ENCODE measurements at regions of chr10 and their contacts with region 1.

Region 1: GRCh38 chr10:104308439-104308903 is 29.8 kb downstream of the ITPRIP start:
- DNase-seq: peak in 6 of 10 donors; percentile 32 to 82 (median 57)
- ATAC-seq: peak; percentile 75
- H3K4me3 Mint-ChIP-seq: peak overlapping the region; percentile 50 to 83 (median 71)
- H3K27ac Mint-ChIP-seq: peak overlapping the region; percentile 16 to 90 (median 80)
- H3K4me1 Mint-ChIP-seq: peaks cover 48 to 81% (median 73%) of the 10 kb centered on the region in 4 donors
- H3K27me3 Mint-ChIP-seq: peaks cover 0 to 2% (median 0%) of the 10 kb centered on the region in 5 donors

Region 2: GRCh38 chr10:104146882-104147281 is 161.6 kb before region 1 on chr10:
- POLR2A ChIA-PET with region 1: no interaction called
- DNase-seq: no peak
- ATAC-seq: no peak
- H3K4me3 Mint-ChIP-seq: no peak overlapping the region
- H3K27ac Mint-ChIP-seq: no peak overlapping the region
- H3K4me1 Mint-ChIP-seq: no peaks in the 10 kb centered on the region
- H3K27me3 Mint-ChIP-seq: peaks cover 9 to 22% (median 11%) of the 10 kb centered on the region in 5 donors

Region 3: GRCh38 chr10:104268716-104269645 is 39.5 kb before region 1 on chr10 and contains the start of gene GSTO2:
- POLR2A ChIA-PET with region 1: no interaction called
- DNase-seq: peak; percentile 93 to 99 (median 98)
- ATAC-seq: peak; percentile 89 to 94
- H3K4me3 Mint-ChIP-seq: peak within 1 kb of the TSS; percentile 89 to 96 (median 94)
- H3K27ac Mint-ChIP-seq: peak within 1 kb of the TSS; percentile 94 to 99 (median 98)
- H3K4me1 Mint-ChIP-seq: peaks cover 13 to 51% (median 47%) of the 10 kb centered on the region in 4 donors
- H3K27me3 Mint-ChIP-seq: no peaks in the 10 kb centered on the region
- polyA plus RNA-seq, gene GSTO2: 0.15 to 2.0 (median 1.1) TPM

Region 4: DNA sequence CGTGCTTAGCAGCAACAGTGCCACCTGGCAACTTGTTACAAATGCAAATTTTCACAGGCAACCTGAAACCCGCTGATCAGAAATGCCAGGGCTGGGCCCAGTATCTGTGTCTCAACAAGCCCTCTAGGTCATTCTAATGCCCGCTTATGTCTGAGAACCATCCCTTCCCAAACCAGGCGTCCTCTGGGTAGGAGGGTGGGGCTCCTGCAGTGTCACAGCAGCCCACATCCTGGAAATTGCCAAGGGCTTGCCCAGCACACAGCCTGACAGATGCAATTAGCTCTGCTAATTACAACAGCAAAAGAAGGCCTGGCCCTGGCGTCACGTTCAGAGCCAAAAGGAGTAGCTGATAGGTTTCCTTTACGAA is 13.9 kb after region 1 on chr10:
- POLR2A ChIA-PET with region 1: interaction called, 33 read pairs
- DNase-seq: no peak
- ATAC-seq: peak; percentile 36 to 46
- H3K4me3 Mint-ChIP-seq: peak overlapping the region; percentile 64 to 89 (median 85)
- H3K27ac Mint-ChIP-seq: peak overlapping the region; percentile 89 to 98 (median 94)
- H3K4me1 Mint-ChIP-seq: peaks cover 61 to 100% (median 100%) of the 10 kb centered on the region in 4 donors
- H3K27me3 Mint-ChIP-seq: no peaks in the 10 kb centered on the region

Region 5: GRCh38 chr10:104328896-104329710 is 20.6 kb after region 1 on chr10:
- POLR2A ChIA-PET with region 1: interaction called, 93 read pairs
- DNase-seq: peak; percentile 48 to 91 (median 77)
- ATAC-seq: peak; percentile 56 to 69
- H3K4me3 Mint-ChIP-seq: peak overlapping the region; percentile 69 to 89 (median 86)
- H3K27ac Mint-ChIP-seq: peak overlapping the region; percentile 94 to 100 (median 98)
- H3K4me1 Mint-ChIP-seq: peaks cover 62 to 100% (median 97%) of the 10 kb centered on the region in 4 donors
- H3K27me3 Mint-ChIP-seq: peaks cover 0 to 2% (median 0%) of the 10 kb centered on the region in 5 donors

Region 6: GRCh38 chr10:104337974-104338735 is 29.7 kb after region 1 on chr10 and contains the start of gene ITPRIP:
- POLR2A ChIA-PET with region 1: interaction called, 93 read pairs
- DNase-seq: peak; percentile 56 to 95 (median 74)
- ATAC-seq: peak; percentile 73 to 78
- H3K4me3 Mint-ChIP-seq: peak within 1 kb of the TSS; percentile 89 to 100 (median 98)
- H3K27ac Mint-ChIP-seq: peak within 1 kb of the TSS; percentile 95 to 100 (median 98)
- H3K4me1 Mint-ChIP-seq: peaks cover 23 to 53% (median 53%) of the 10 kb centered on the region in 4 donors
- H3K27me3 Mint-ChIP-seq: no peaks in the 10 kb centered on the region
- polyA plus RNA-seq, gene ITPRIP: 10.6 to 16.0 (median 15.6) TPM

Region 7: DNA sequence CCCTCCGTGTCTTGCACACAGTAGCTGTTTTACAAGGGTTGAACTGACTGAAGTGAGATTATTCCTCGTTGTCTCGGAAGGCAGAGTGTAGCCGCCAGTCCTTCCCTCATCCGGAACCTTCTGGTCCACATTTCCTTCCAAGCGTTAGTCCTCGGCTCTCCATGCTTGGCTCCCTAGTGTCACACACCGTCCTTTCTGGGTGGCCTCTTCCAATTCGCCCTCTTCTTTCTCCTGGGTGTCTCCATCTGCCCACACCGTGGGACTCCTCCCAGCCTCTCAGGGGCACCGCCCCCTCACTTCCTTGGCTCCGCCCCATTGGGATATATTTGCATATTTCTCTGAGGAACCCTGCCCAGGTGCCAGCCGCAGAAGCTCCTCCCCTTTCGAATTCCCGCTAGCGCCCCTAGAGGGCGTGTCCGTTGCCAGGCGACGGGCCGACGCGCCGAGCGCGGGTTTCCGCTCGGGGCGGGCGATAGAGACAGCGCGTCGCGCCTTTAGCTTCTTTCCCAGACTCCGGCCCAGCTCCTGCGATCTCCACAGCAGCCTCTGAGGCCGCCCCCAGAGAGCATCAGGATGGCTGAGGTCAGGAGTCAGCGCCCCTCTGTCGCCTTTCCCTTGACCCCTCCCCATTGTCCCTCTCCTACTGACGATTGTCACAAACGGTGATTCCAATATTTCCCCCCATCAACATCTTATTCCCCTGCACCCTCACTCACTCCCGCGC is 45.0 kb after region 1 on chr10 and contains the start of gene CFAP58:
- POLR2A ChIA-PET with region 1: interaction called, 24 read pairs
- DNase-seq: peak; percentile 78 to 93 (median 86)
- ATAC-seq: peak; percentile 88 to 89
- H3K4me3 Mint-ChIP-seq: peak within 1 kb of the TSS in 5 of 10 donors; percentile 0 to 49 (median 35)
- H3K27ac Mint-ChIP-seq: peak within 1 kb of the TSS in 2 of 10 donors; percentile 47 to 72
- H3K4me1 Mint-ChIP-seq: peaks cover 2 to 6% (median 5%) of the 10 kb centered on the region in 4 donors
- H3K27me3 Mint-ChIP-seq: no peaks in the 10 kb centered on the region
- polyA plus RNA-seq, gene CFAP58: not detected

Region 8: DNA sequence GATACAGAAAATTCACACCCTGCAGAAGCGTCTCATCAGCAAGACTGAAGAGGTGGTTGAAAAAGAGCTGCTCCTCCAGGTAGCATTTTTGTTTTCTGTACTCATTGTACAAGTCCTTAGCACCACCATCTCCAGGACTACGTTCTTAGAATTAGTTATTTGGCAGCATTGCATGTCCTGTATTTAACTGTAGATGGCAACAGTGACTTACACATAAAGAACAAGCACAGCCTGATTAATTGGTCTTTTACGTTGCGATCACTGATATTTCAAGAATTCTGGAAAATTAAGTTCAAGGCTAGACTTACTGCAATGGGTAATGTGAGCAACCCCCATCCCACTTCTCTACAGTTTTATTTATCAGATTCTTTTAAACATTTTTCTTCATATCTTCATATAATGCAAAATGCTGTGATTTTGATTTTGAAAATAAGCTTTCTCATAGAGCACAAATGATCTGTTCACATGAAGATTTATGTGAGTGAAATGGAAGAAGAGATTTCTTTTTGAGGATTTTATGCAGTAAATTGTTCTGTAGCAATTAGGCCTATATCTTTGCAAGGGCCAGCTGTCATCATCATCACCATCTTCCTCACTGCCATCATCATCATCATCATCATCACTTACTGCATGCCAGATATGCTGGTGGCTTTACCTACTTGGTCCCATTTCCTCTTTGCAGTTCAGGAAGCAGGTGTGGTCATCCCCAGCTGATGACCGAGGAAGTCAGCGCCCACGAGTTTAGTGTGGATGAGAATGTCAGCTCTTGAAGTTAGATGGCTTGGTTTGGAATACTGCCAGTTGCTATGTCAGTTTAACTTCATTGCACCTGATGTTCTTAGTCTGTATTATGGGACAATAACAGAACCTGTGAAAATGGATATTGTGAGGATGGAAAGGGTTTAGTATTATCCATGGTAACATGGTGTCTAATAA is 98.5 kb after region 1 on chr10:
- POLR2A ChIA-PET with region 1: no interaction called
- DNase-seq: peak in 2 of 10 donors; percentile 2 to 4
- ATAC-seq: no peak
- H3K4me3 Mint-ChIP-seq: no peak overlapping the region
- H3K27ac Mint-ChIP-seq: no peak overlapping the region
- H3K4me1 Mint-ChIP-seq: peaks cover 0 to 7% (median 4%) of the 10 kb centered on the region in 4 donors
- H3K27me3 Mint-ChIP-seq: peaks cover 6 to 32% (median 11%) of the 10 kb centered on the region in 5 donors

Region 9: GRCh38 chr10:104880624-104881398 is 572.3 kb after region 1 on chr10:
- POLR2A ChIA-PET with region 1: no interaction called
- DNase-seq: no peak
- ATAC-seq: no peak
- H3K4me3 Mint-ChIP-seq: no peak overlapping the region
- H3K27ac Mint-ChIP-seq: no peak overlapping the region
- H3K4me1 Mint-ChIP-seq: no peaks in the 10 kb centered on the region
- H3K27me3 Mint-ChIP-seq: peaks cover 0 to 9% (median 7%) of the 10 kb centered on the region in 5 donors

Measured in naive thymus-derived CD8-positive, alpha-beta T cell (primary cell).